ENCODE measurements at regions of chr6 and their contacts with region 1.

Region 1: DNA sequence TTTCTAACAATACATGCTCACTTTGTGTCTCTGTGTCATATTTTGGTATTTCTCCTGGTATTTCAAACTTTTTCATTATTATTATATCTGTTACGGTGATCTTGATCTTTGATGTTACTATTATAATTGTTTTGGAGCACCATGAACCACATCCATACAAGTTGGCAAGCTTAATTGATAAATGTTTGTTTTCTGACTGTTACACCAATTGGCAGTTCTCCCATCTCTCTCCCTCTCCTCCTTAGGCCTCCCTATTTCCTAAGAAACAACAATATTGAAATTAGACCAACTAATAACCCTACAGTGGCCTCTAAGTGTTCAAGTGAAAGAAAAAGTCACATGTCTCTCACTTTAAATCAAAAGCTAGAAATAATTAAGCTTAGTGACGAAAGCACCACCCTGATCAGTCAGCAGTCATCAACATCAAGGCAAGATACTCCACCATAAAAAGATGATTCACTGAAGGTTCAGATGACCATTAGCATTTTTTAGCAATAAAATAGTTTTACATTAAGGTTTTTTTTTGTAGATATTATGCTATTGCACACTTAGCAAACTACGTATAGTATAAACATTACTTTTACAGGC is 61.5 kb downstream of the IBTK start:
- DNase-seq: no peak
- ATAC-seq: no peak
- H3K4me3 ChIP-seq: no peak overlapping the region
- H3K4me3 Mint-ChIP-seq: no peak overlapping the region
- H3K27ac ChIP-seq: no peak overlapping the region
- H3K27ac Mint-ChIP-seq: no peak overlapping the region
- H3K4me1 ChIP-seq: no peaks in the 10 kb centered on the region
- H3K4me1 Mint-ChIP-seq: no peaks in the 10 kb centered on the region
- H3K27me3 ChIP-seq: no peaks in the 10 kb centered on the region
- H3K27me3 Mint-ChIP-seq: no peaks in the 10 kb centered on the region
- CTCF ChIP-seq: no peak

Region 2: GRCh38 chr6:81304466-81304865 is 881.6 kb before region 1 on chr6:
- CTCF ChIA-PET with region 1: no interaction called
- POLR2A ChIA-PET with region 1: no interaction called
- intact Hi-C with region 1: no loop called
- DNase-seq: no peak
- ATAC-seq: no peak
- H3K4me3 ChIP-seq: no peak overlapping the region
- H3K4me3 Mint-ChIP-seq: no peak overlapping the region
- H3K27ac ChIP-seq: no peak overlapping the region
- H3K27ac Mint-ChIP-seq: no peak overlapping the region
- H3K4me1 ChIP-seq: no peaks in the 10 kb centered on the region
- H3K4me1 Mint-ChIP-seq: no peaks in the 10 kb centered on the region
- H3K27me3 ChIP-seq: no peaks in the 10 kb centered on the region
- H3K27me3 Mint-ChIP-seq: no peaks in the 10 kb centered on the region
- CTCF ChIP-seq: no peak

Region 3: DNA sequence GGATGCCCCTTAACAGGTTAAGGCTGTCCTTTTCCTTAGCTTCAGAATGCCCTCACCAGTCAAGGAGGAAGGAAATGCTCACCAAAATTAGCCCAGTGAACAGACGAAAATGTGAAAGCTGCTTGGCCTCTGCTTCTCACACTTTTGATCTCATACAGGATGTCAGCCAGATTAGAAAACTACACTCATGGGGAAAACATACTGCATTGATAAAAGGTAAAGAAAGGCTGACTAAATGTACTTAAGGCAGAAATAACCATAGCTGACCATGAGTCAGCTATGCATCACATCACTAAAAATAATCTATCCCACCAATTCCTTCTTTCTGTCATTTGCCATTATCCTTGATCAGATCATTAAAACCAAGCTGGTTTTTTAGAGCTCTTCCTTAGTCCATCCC is 235.2 kb before region 1 on chr6:
- CTCF ChIA-PET with region 1: no interaction called
- POLR2A ChIA-PET with region 1: no interaction called
- intact Hi-C with region 1: no loop called
- DNase-seq: no peak
- ATAC-seq: no peak
- H3K4me3 ChIP-seq: no peak overlapping the region
- H3K4me3 Mint-ChIP-seq: no peak overlapping the region
- H3K27ac ChIP-seq: no peak overlapping the region
- H3K27ac Mint-ChIP-seq: no peak overlapping the region
- H3K4me1 ChIP-seq: no peaks in the 10 kb centered on the region
- H3K4me1 Mint-ChIP-seq: no peaks in the 10 kb centered on the region
- H3K27me3 ChIP-seq: no peaks in the 10 kb centered on the region
- H3K27me3 Mint-ChIP-seq: no peaks in the 10 kb centered on the region
- CTCF ChIP-seq: no peak

Region 4: DNA sequence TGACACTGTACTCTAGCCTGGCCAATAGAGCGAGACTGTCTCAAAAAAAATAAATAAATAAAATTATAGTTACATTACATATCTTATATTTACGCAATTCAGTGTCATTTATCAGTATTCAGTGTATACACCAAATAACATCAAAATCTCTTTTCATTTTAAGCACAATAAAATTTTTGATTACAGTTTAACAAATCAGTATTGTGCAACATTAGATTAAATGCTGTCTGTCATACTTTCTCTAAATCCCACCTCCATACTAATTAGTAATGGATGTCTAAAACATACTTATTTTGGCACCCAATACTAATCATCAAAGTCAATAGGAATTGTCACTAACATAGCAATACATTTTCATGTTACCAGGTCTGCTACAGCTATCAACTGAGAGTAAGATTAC is 34.1 kb after region 1 on chr6:
- CTCF ChIA-PET with region 1: no interaction called
- POLR2A ChIA-PET with region 1: no interaction called
- intact Hi-C with region 1: loop called in 1 of 2 experiments (anchors 5 kb)
- DNase-seq: no peak
- ATAC-seq: no peak
- H3K4me3 ChIP-seq: no peak overlapping the region
- H3K4me3 Mint-ChIP-seq: no peak overlapping the region
- H3K27ac ChIP-seq: no peak overlapping the region
- H3K27ac Mint-ChIP-seq: no peak overlapping the region
- H3K4me1 ChIP-seq: no peaks in the 10 kb centered on the region
- H3K4me1 Mint-ChIP-seq: no peaks in the 10 kb centered on the region
- H3K27me3 ChIP-seq: no peaks in the 10 kb centered on the region
- H3K27me3 Mint-ChIP-seq: no peaks in the 10 kb centered on the region
- CTCF ChIP-seq: no peak